ENCODE measurements at regions of chr3 and their contacts with region 1.

Region 1: DNA sequence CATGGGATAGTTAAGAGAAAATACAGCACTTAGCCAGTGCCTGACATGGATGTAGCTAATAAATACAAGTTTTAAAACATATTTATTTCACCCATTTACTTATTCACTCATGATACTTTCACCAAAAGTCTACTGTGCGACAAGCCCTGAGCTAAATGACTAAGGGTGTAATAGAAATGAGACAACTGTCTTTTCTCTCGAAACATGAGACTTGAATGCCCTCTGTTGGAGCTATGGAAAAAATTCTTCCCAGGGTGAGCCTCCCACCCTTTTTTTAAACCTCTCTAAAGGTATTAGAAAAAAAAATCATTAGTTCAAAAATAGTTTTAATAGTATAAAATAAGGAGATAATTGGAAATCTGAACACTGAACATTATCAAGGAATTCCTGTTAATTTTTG is 24.3 kb upstream of the RPL14 start:
- DNase-seq: no peak
- ATAC-seq: no peak
- H3K4me3 ChIP-seq: no peak overlapping the region
- H3K27ac ChIP-seq: no peak overlapping the region
- H3K4me1 ChIP-seq: no peaks in the 10 kb centered on the region
- H3K27me3 ChIP-seq: no peaks in the 10 kb centered on the region
- CTCF ChIP-seq: peak in 4 of 9 donors; percentile 10 to 20 (median 16)

Region 2: GRCh38 chr3:40191850-40192448 is 240.8 kb before region 1 on chr3:
- intact Hi-C with region 1: loop called in 1 of 10 experiments (anchors 10 kb)
- DNase-seq: peak; percentile 37 to 41
- ATAC-seq: peak in 4 of 8 donors; percentile 54 to 69 (median 62)
- H3K4me3 ChIP-seq: no peak overlapping the region
- H3K27ac ChIP-seq: no peak overlapping the region
- H3K4me1 ChIP-seq: peaks cover 0 to 21% (median 5%) of the 10 kb centered on the region in 9 donors
- H3K27me3 ChIP-seq: no peaks in the 10 kb centered on the region
- CTCF ChIP-seq: peak; percentile 91 to 98 (median 95)

Region 3: DNA sequence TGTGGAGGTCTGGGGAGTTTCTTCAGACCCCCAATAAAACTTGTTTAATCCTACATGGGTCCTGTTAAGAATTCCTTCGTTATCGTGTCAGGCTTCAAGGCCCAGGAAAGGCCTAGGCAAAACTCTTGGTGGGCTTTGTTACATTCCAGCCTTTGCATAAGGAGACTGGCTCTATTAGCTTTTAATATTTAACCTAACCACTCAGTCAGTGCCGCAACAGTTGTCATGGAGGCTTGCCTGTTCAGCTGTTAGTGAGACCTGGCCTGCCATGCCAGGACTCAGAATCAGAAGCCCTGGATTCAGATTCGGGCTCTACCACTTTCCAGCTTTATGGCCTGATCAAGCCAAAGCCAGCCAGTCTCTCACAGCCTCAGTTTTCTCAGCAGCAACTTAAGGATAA is 103.7 kb before region 1 on chr3:
- intact Hi-C with region 1: loop called in 4 of 10 experiments (anchors 5 kb)
- DNase-seq: no peak
- ATAC-seq: no peak
- H3K4me3 ChIP-seq: no peak overlapping the region
- H3K27ac ChIP-seq: no peak overlapping the region
- H3K4me1 ChIP-seq: peaks cover 0 to 13% (median 3%) of the 10 kb centered on the region in 9 donors
- H3K27me3 ChIP-seq: no peaks in the 10 kb centered on the region
- CTCF ChIP-seq: no peak